Activated T-helper 1 cell treated with anti-CD3 and anti-CD28 coated beads, Interleukin-12 subunit alpha, Interleukin-12 subunit beta, Interleukin-2, Interleukin-4 antibody, amounts not matched to agents 30 ng/mL and 10 ng/mL and 1 ng/mL, durations not matched to agents 14 hours and 24 hours and 36 hours (primary cell): ENCODE measurements at regions of chr10 and their contacts with region 1.

Region 1: DNA sequence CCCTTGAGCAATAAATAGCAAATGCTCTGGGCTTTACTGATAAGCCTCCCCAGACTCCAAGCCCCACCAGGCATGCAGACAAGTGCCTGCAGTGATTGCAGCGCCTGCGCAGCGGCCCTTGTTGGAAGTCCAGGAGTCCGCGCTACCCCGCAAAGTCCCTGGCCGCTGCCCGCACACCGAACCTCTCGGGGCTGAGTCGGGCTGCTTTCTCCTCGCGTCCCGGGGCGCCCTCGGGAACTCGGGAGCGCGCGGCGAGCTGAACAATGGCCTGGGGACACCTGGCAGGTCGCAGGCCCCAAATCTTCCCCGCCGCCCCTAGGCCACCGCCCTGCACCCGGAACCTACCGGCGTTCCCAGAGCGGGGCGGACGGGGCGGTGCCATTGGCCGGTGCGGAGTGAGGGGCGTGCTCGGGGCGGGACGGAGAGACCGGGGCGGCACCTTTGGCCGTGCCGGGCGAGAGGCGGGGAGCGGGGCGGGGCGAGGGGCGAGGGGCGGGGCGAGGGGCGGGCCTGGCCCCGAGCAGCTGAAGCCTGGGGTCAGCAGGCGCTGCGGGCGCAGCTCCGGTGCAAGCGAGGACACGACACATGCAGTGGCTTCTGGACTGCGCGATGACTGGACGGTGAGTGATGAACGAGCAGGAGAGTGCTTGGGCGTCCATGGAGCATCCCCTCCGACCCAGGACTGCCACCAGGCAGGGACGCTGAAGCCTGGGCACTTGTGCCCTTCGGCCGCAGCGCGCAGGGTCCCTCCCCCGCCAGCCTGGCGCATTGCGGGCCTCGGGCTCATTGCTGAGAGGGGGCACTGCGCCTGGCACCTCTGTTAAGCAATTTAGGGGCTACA is at the start of gene RASSF4:
- DNase-seq: peak; percentile 91
- H3K4me3 Mint-ChIP-seq: peak within 1 kb of the TSS; percentile 87
- H3K27ac Mint-ChIP-seq: peak within 1 kb of the TSS; percentile 73
- H3K4me1 Mint-ChIP-seq: peaks cover 24% of the 10 kb centered on the region
- H3K27me3 Mint-ChIP-seq: no peaks in the 10 kb centered on the region
- total RNA-seq, gene RASSF4: 1.3 and 2.5 TPM in 2 replicates

Region 2: DNA sequence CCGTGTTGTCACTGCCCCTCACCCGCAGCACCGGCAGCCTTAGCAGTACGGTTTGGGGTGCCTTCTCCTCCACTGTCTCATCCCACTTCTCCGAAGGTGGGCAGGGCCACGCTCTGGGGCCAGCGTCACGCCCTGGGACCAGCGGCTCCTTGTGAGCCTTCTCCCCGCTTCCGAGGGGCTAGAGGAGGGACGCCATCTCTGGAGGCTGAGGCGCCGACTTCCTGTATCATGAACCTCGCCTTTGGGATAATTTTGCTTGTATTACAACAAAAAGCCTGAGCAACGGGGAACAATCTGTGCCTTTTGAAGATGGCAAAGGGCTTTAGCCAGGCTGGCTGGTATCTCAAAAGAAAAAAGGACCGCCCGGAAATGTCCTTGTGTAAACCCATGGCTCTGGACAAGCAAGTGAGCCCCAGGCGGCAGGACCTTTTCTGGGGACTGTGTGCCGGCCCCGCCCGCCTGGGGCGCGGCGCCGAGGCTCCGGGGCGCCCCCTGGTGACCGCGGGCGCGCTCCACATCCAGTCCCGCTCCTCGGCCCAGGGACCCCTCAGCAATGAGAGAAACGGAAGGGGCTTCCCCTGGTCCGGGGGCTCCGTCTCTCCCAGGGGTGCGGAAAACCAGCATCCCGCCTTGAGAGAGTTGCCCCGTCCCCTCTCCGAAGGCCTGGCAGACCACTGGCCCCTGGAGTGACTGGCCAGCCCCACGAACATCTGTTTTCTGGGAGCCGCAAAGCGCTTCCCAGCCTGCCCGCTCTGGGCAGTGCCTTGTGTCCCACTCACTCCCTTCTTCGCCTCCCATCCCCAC is 15.4 kb after region 1 on chr10:
- intact Hi-C with region 1: loop called (anchors 1 kb)
- DNase-seq: peak; percentile 66
- H3K4me3 Mint-ChIP-seq: peak overlapping the region; percentile 75
- H3K27ac Mint-ChIP-seq: peak overlapping the region; percentile 40
- H3K4me1 Mint-ChIP-seq: peaks cover 35% of the 10 kb centered on the region
- H3K27me3 Mint-ChIP-seq: no peaks in the 10 kb centered on the region

Region 3: DNA sequence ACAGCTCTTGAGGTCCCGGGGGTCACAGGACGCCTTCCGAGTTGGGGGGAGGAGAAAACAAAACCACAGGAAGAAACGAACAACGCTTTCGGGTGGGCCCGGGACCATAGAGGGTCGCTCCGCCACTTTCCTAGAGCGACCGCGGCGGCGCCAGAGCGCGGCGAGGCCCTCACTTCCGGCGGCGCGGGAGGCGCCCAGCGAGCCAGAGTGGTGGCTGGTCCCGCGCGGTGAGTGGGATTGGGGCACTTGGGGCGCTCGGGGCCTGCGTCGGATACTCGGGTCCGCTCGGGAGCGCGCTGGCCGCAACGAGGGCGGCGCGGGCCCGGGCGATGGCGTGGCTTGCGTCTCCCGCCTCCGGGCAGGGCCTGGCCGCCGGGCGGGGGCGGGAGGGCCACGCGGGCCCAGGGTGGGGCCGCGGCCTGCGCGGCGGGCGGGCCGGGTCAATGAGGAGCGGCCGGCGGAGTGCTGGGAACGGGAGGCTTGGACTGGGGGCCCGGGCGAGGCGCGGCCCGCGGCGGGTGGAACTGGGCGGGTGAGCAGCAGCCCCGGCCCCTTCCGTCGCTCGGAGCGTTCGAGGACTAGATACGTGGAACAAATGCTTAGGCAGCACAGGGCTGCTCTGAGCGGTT is 41.4 kb after region 1 on chr10 and contains the start of gene ZNF22:
- intact Hi-C with region 1: loop called (anchors 1 kb)
- DNase-seq: peak; percentile 61
- H3K4me3 Mint-ChIP-seq: peak within 1 kb of the TSS; percentile 93
- H3K27ac Mint-ChIP-seq: peak within 1 kb of the TSS; percentile 96
- H3K4me1 Mint-ChIP-seq: peaks cover 34% of the 10 kb centered on the region
- H3K27me3 Mint-ChIP-seq: peaks cover 7% of the 10 kb centered on the region
- total RNA-seq, gene ZNF22: 23.1 and 25.6 TPM in 2 replicates